ENCODE measurements at regions of chr7 and their contacts with region 1.

Region 1: GRCh38 chr7:85023045-85023712 is 163.7 kb downstream of the SEMA3D start:
- DNase-seq: peak in 2 of 6 donors; percentile 13 to 16
- ATAC-seq: peak in 3 of 4 donors; percentile 46 to 67 (median 56)
- H3K4me3 ChIP-seq: no peak overlapping the region
- H3K27ac ChIP-seq: no peak overlapping the region
- H3K4me1 ChIP-seq: peaks cover 4 to 7% (median 4%) of the 10 kb centered on the region in 3 donors
- H3K27me3 ChIP-seq: peaks cover 0 to 8% (median 4%) of the 10 kb centered on the region in 4 donors
- CTCF ChIP-seq: peak; percentile 29 to 54 (median 46)

Region 2: GRCh38 chr7:83976295-83976694 is 1046.9 kb before region 1 on chr7:
- intact Hi-C with region 1: loop called in 2 of 3 experiments (anchors 5 kb)
- DNase-seq: no peak
- ATAC-seq: peak in 3 of 4 donors; percentile 71 to 81 (median 71)
- H3K4me3 ChIP-seq: no peak overlapping the region
- H3K27ac ChIP-seq: no peak overlapping the region
- H3K4me1 ChIP-seq: no peaks in the 10 kb centered on the region
- H3K27me3 ChIP-seq: no peaks in the 10 kb centered on the region
- CTCF ChIP-seq: peak in 3 of 4 donors; percentile 24 to 56 (median 48)

Region 3: GRCh38 chr7:84855758-84856157 is 167.4 kb before region 1 on chr7:
- intact Hi-C with region 1: no loop called
- DNase-seq: no peak
- ATAC-seq: no peak
- H3K4me3 ChIP-seq: no peak overlapping the region
- H3K27ac ChIP-seq: no peak overlapping the region
- H3K4me1 ChIP-seq: no peaks in the 10 kb centered on the region
- H3K27me3 ChIP-seq: no peaks in the 10 kb centered on the region
- CTCF ChIP-seq: no peak

Measured in pancreas (tissue), 10 donors.